Posterior vena cava (tissue), 2 donors: ENCODE measurements at regions of chr7 and their contacts with region 1.

Region 1: DNA sequence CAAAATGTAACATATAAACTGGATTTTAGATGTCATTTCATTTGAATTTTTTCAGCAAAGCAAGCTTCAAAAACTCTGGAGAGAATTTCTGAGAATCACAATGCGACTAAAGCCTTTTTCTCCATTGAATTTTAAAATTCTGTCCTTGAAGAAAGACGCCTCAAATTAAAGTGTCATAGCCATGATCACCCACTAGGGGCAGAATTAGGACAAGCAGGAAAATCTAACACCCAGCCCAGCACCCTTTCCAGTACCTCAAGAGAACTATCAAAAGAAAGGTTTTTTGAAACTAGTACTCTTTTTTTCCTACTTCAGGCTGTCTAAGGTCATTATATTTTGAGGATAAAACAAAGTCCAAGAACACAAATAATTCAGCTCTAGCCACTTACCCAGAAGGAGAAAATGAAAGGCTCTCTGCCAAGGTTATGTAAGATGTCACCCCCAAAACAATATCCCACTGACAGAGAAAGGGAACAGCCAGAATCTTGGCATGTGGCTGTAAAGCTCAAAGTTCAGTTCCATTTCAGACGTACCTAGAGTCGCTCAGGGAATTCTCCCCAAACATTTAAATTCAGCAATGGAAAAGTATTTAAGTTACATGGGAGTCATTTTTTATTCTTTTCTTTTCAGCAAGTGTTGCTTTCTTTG is 299.4 kb downstream of the SNX13 start:
- DNase-seq: no peak

Region 2: DNA sequence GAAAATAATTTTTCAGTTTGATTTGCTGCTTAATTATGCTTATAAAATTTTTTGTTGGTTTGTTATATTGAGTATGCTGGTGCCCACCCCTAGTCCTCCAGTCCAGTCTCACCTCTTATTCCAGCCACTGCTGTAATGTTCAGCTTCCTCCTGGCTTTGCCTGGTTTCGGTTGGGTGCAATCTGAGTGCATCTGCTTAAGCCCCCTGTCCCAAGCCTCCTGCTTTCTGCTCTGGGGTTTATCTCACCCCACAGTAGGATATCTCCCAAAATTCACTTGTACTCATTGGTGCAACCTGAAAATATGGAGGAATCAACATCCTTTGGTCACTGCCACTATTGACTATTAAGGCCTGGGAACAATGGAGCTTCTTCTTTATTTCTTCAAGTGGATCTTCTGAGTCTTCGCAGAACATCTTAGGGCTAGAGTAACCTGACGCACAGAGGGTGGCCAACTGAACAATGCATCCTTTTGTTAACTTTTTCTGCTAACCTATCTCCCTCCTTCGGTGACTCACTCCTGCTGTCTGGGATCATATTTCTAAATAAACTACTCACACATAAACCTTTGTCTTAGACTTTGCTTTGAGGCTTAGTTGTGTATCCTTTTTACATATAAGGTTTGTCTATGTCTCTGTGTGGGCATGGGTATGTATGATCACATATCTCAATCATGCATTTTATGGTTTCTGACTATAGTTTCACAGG is 1156.2 kb before region 1 on chr7:
- intact Hi-C with region 1: loop called in 1 of 2 experiments (anchors 5 kb)
- DNase-seq: no peak

Region 3: DNA sequence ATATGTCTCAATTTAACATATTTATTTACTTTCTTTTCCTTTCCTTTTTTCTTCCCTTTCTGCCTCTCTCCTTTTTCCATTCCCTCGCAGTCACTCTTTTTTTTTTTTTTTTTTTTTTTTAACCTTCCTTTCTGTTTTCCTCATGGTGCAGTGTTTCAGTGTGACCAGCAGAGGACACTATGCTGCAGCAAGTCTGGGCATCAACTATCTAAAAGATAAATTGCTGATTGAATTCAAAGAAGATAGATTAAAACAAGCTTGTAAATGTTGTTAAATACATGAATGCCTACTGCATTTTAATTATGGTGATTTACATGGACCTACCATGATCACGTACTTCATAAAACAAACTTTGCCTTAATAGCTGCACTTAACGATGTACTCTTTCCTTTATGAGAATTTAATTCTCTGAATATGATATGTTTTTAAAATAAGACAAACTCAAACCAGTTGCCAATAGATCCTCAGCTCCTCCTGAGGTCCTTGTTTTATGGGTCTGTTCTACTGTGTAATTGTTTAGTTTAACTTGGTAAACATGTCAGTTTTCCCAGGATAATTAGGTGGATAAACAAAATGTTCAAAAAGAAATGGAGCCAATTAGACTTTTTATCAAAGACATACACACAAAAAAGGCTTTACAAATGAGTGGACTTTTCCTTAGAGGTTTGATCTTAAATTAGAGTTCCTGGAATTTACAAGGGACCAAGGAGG is 658.1 kb before region 1 on chr7:
- intact Hi-C with region 1: loop called in 1 of 2 experiments (anchors 10 kb)
- DNase-seq: no peak

Region 4: GRCh38 chr7:17506095-17506494 is 134.8 kb before region 1 on chr7:
- intact Hi-C with region 1: loop called in 1 of 2 experiments (anchors 10 kb)
- DNase-seq: no peak

Region 5: DNA sequence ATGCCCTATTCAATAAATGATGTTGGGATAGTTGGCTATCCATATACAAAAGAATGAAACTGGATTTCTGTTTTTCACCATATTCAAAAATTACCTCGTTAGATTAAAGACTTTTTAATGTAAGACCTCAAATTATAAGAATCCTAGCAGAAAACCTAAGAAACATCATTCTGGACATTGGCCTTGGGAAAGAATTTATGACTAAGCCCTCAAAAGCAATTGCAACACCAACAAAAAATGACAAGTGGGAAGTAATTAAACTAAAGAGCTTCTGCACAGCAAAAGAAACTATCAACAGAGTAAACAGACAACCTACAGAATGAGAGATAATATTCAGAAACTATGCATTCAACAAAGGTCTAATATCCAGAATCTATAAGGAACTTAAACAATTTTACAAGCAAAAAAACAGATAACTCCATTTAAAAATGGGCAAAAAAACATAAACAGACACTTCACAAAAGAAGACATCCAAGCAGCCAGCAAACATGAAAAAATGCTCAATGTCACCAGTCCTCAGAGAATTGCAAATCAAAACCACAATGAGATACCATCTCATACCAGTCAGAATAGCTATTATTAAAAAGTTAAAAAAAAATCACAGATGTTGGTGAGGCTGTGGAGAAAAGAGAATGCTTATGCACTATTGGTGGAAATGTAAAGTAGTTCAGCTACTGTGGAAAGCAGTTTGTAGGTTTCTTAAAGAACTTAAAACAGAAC is 32.6 kb before region 1 on chr7:
- intact Hi-C with region 1: no loop called
- DNase-seq: no peak